Esophagus squamous epithelium (tissue), 5 donors: ENCODE measurements at regions of chr15 and their contacts with region 1.

Region 1: GRCh38 chr15:79028411-79028964 is 62.1 kb downstream of the RASGRF1 start:
- DNase-seq: no peak
- H3K4me3 ChIP-seq: no peak overlapping the region
- H3K27ac ChIP-seq: no peak overlapping the region
- H3K4me1 ChIP-seq: no peaks in the 10 kb centered on the region
- H3K27me3 ChIP-seq: no peaks in the 10 kb centered on the region
- CTCF ChIP-seq: peak; percentile 15 to 75 (median 58)
- POLR2A ChIP-seq: no peak

Region 2: DNA sequence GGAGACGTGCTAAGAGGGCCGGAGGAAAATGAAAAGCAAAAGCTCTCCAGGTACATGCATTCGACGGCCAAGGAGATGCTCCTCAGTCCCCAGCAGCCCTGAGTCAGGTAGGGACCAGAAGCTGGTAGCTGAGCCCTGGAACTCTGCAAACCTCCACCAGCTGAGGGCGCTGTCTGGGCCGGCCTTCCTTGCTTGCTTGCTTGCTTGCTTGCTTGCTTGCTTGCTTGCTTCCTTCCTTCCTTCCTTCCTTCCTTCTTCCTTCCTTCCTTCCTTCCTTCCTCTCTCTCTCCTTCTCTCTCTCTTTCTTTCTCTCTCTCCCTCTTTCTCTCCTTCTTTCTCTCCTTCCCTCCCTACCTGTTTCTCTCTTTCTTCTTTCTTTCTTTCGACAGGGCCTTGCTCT is 156.7 kb after region 1 on chr15:
- intact Hi-C with region 1: loop called (anchors 5 kb)
- DNase-seq: no peak
- H3K4me3 ChIP-seq: no peak overlapping the region
- H3K27ac ChIP-seq: no peak overlapping the region
- H3K4me1 ChIP-seq: no peaks in the 10 kb centered on the region
- H3K27me3 ChIP-seq: peaks cover 0 to 5% (median 0%) of the 10 kb centered on the region in 4 donors
- CTCF ChIP-seq: peak in 3 of 6 experiments; percentile 3 to 20 (median 5)
- POLR2A ChIP-seq: no peak